Activated CD4-positive, alpha-beta T cell treated with anti-CD3 and anti-CD28 coated beads, Interleukin-2, amount 10 ng/mL, durations not matched to agents 24 days and 14 days (primary cell): ENCODE measurements at regions of chr6 and their contacts with region 1.

Region 1: DNA sequence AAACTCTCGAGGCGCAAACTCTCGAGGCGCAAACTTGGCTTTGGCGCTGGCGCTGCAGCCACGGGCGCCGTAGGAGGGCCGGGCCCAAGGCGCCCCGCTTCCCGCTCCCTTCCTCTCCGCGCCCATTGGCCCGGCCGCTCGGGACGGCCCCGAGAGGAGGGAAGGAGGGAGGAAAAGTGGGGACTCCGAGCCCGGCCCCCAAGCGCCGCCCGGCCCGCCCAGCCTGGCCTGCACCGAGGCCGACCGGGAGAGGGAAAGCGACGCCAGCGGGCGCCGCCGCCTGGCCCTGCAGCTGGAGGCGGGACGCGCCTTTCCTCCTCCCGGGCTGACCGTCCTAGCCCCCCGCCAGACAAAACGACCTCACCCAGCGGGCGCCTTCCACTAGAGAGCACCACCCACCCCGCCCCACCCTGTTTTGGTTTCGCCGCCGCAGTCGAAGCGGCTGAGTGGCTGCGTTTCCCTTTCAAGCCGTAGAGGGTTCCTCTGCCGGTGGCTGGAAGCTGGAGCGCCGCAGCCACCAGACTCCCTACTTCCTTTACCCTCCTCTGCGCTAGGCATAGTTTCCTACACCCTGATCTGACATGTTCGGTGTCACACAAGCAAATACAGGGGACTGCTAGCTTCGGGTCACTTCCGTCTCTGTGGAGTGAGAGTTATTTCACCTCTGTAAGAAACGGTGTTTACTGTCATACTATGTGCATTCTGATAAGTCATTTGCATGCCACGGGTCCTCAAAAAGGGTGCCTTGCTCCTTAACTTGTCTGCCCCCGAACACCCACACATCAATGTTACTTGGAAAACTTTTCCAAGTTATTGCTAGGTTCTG is at the start of gene MBOAT1:
- DNase-seq: peak; percentile 94
- H3K4me3 Mint-ChIP-seq: peak within 1 kb of the TSS; percentile 91
- H3K27ac Mint-ChIP-seq: peak within 1 kb of the TSS; percentile 91
- H3K4me1 Mint-ChIP-seq: peaks cover 38% of the 10 kb centered on the region
- H3K27me3 Mint-ChIP-seq: peaks cover 2% of the 10 kb centered on the region
- total RNA-seq, gene MBOAT1: 11.8 and 12.8 TPM in 2 replicates

Region 2: GRCh38 chr6:20126789-20127653 is 85.6 kb before region 1 on chr6:
- intact Hi-C with region 1: loop called (anchors 2 kb)
- DNase-seq: peak; percentile 88
- H3K4me3 Mint-ChIP-seq: no peak overlapping the region
- H3K27ac Mint-ChIP-seq: peak overlapping the region; percentile 28
- H3K4me1 Mint-ChIP-seq: peaks cover 3% of the 10 kb centered on the region
- H3K27me3 Mint-ChIP-seq: no peaks in the 10 kb centered on the region

Region 3: DNA sequence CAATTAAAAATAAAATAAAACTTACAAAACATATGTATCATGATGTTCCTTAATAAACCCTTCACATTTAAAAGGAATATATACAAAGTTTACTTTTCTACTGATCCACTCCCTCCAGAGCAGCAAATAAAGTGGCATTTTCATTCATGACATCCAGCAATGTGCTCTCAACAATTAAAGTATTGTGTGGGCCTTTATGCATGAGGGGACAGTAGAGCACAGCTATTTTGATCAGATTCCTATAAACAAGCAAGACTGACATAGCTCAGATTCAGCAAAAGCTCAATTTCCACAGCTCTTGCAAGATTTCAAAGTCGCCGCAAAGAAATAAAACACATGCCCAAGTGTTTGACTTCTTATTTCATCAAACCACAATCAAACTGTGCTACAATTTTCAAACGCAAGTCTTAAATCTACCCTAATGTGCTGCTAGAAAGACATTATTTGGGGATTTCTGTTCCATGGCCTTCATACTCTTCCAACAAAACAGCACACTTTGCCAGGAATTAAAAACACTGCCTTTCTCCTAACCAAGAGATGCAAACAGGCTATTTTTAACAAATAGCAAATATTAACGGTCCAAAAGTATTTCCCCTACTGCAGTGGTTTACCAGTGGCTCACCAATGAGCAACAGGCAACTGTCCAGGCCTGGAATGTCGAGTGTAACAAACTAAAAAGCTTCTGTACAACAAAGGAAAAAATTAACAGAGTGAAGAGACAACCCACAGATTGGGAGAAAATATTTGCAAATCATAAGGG is 52.6 kb before region 1 on chr6:
- intact Hi-C with region 1: no loop called
- DNase-seq: no peak
- H3K4me3 Mint-ChIP-seq: no peak overlapping the region
- H3K27ac Mint-ChIP-seq: no peak overlapping the region
- H3K4me1 Mint-ChIP-seq: no peaks in the 10 kb centered on the region
- H3K27me3 Mint-ChIP-seq: no peaks in the 10 kb centered on the region

Region 4: DNA sequence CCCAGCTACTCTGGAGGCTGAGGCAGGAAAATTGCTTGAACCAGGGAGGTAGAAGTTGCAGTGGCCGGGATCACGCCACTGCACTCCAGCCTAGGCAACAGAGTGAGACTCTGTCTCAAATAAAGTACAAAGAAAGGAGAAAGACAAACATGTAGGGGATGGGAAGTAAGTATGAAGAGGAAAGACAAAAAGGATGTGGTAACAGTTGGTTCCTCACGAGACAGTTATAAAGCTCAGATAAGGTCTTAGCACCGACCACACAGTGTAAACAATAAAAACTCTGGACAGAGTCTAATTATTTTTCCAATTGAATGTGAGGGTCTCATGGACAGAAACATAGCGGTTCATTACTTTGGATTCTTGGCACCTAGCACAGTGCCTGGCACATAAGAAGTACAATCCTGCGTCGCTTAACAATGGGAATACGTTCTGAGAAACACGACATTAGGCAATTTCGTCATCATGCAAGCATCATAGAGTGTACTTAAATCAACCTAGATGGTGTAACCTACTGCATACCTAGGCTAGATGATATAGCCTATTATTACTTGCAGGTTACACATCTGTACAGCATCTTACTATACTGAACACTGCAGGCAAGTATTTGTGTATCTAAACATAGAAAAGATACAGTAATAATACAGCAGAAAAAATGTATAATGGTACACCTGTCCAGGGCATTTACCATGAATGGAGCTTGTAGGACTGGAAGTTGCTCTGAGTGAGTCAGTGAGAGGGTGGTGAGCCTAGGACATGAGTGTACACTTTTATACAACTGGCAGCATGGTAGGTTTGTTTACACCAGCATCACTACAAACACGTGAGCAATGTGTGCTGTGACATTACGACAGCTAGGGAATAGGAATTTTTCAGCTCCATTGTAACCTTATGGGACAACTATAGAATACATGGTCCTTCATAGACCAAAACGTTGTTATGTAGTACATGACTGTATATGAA is 38.5 kb before region 1 on chr6:
- intact Hi-C with region 1: loop called (anchors 2 kb)
- DNase-seq: no peak
- H3K4me3 Mint-ChIP-seq: peak overlapping the region; percentile 59
- H3K27ac Mint-ChIP-seq: peak overlapping the region; percentile 46
- H3K4me1 Mint-ChIP-seq: peaks cover 27% of the 10 kb centered on the region
- H3K27me3 Mint-ChIP-seq: no peaks in the 10 kb centered on the region

Region 5: DNA sequence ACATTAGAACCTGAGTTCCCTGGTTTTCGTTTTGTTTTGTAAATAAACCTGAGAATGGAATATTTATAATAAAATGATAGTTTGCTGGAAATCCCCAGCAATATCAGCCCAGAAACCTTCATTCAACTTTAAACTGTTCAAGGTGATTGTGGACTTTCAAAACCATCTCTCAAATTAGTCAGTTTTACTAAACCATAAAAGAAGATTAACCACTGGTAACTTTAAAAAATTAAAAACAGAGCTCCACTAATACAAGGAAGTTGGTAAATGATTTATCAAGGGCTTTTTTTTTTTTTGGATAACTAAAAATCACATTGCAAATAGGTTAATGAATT is 10.3 kb before region 1 on chr6:
- intact Hi-C with region 1: loop called (anchors 1 kb)
- DNase-seq: no peak
- H3K4me3 Mint-ChIP-seq: no peak overlapping the region
- H3K27ac Mint-ChIP-seq: peak overlapping the region; percentile 21
- H3K4me1 Mint-ChIP-seq: peaks cover 57% of the 10 kb centered on the region
- H3K27me3 Mint-ChIP-seq: no peaks in the 10 kb centered on the region

Region 6: GRCh38 chr6:20286968-20287565 is 74.5 kb after region 1 on chr6:
- intact Hi-C with region 1: no loop called
- DNase-seq: no peak
- H3K4me3 Mint-ChIP-seq: no peak overlapping the region
- H3K27ac Mint-ChIP-seq: no peak overlapping the region
- H3K4me1 Mint-ChIP-seq: peaks cover 6% of the 10 kb centered on the region
- H3K27me3 Mint-ChIP-seq: peaks cover 28% of the 10 kb centered on the region

Region 7: GRCh38 chr6:20534295-20535262 is 322.0 kb after region 1 on chr6 and contains the start of gene CDKAL1:
- intact Hi-C with region 1: loop called (anchors 2 kb)
- DNase-seq: peak; percentile 97
- H3K4me3 Mint-ChIP-seq: peak within 1 kb of the TSS; percentile 96
- H3K27ac Mint-ChIP-seq: peak within 1 kb of the TSS; percentile 95
- H3K4me1 Mint-ChIP-seq: peaks cover 37% of the 10 kb centered on the region
- H3K27me3 Mint-ChIP-seq: peaks cover 2% of the 10 kb centered on the region
- total RNA-seq, gene CDKAL1: 28.5 and 29.1 TPM in 2 replicates